CD8-positive, alpha-beta T cell (primary cell): ENCODE measurements at regions of chr11 and their contacts with region 1.

Region 1: GRCh38 chr11:13902523-13902922 is 60.0 kb upstream of the SPON1 start:
- DNase-seq: no peak
- ATAC-seq: no peak
- H3K4me3 ChIP-seq: no peak overlapping the region
- H3K4me3 Mint-ChIP-seq: no peak overlapping the region
- H3K27ac ChIP-seq: no peak overlapping the region
- H3K27ac Mint-ChIP-seq: no peak overlapping the region
- H3K4me1 ChIP-seq: no peaks in the 10 kb centered on the region
- H3K4me1 Mint-ChIP-seq: no peaks in the 10 kb centered on the region
- H3K27me3 ChIP-seq: no peaks in the 10 kb centered on the region
- H3K27me3 Mint-ChIP-seq: no peaks in the 10 kb centered on the region
- CTCF ChIP-seq: no peak

Region 2: GRCh38 chr11:13818325-13818724 is 84.2 kb before region 1 on chr11:
- CTCF ChIA-PET with region 1: interaction called, 3 read pairs
- POLR2A ChIA-PET with region 1: no interaction called
- intact Hi-C with region 1: loop called in 1 of 2 experiments (anchors 10 kb)
- DNase-seq: no peak
- ATAC-seq: no peak
- H3K4me3 ChIP-seq: no peak overlapping the region
- H3K4me3 Mint-ChIP-seq: no peak overlapping the region
- H3K27ac ChIP-seq: no peak overlapping the region
- H3K27ac Mint-ChIP-seq: no peak overlapping the region
- H3K4me1 ChIP-seq: no peaks in the 10 kb centered on the region
- H3K4me1 Mint-ChIP-seq: no peaks in the 10 kb centered on the region
- H3K27me3 ChIP-seq: no peaks in the 10 kb centered on the region
- H3K27me3 Mint-ChIP-seq: no peaks in the 10 kb centered on the region
- CTCF ChIP-seq: no peak